Activated T-helper 1 cell treated with anti-CD3 and anti-CD28 coated beads, Interleukin-12 subunit alpha, Interleukin-12 subunit beta, Interleukin-2, Interleukin-4 antibody, amounts not matched to agents 30 ng/mL and 10 ng/mL and 1 ng/mL, durations not matched to agents 14 hours and 24 hours and 36 hours (primary cell): ENCODE measurements at regions of chr12 and their contacts with region 1.

Region 1: GRCh38 chr12:96399919-96400797 is at the start of gene CDK17:
- DNase-seq: peak; percentile 83
- H3K4me3 Mint-ChIP-seq: peak within 1 kb of the TSS; percentile 93
- H3K27ac Mint-ChIP-seq: peak within 1 kb of the TSS; percentile 97
- H3K4me1 Mint-ChIP-seq: peaks cover 66% of the 10 kb centered on the region
- H3K27me3 Mint-ChIP-seq: no peaks in the 10 kb centered on the region
- total RNA-seq, gene CDK17: 32.4 and 37.1 TPM in 2 replicates

Region 2: GRCh38 chr12:95762123-95762785 is 637.9 kb before region 1 on chr12:
- intact Hi-C with region 1: no loop called
- DNase-seq: no peak
- H3K4me3 Mint-ChIP-seq: no peak overlapping the region
- H3K27ac Mint-ChIP-seq: no peak overlapping the region
- H3K4me1 Mint-ChIP-seq: no peaks in the 10 kb centered on the region
- H3K27me3 Mint-ChIP-seq: peaks cover 23% of the 10 kb centered on the region

Region 3: DNA sequence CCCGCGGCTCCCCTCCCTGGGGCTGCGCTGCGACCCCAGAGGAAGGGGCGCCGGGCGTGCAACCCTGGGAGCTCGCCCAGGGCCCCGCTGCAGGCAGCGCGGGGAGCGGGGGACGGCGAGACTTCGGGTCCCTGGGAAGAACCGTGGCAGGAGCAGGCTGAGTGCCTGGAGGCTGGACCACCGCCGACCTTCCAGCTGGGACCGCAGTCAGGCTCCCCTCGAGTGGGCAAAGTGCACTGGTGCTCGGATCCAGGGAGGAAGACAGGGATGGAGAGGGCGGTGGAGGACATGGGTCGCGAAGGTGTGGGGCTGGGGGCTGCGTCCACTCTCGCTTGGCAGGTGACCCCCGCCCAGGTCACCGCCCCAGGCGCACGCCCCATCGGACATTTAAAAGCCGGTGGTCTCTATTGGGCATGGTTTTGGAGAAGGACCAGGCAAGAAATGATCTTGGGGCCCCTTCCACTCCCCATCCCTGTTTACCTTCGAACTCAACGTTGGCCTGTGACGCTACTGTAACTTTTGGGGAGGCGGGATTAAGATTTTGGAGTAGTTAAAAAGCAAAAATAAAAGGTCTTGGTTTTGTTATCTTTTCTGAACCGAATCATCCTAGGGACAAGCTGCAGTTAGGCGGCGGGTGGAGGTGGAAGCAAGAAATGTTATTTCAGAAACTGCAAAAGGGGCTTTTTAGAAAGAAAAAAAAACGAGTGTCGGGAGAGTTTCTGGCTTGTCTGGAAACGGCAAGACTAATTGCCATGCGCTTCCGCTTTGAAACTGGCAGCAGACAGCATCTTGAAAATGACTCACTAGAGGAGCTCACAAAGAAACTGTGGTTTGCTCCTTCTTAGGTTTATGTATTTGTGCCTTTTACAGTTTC is 204.9 kb before region 1 on chr12:
- intact Hi-C with region 1: loop called (anchors 1 kb)
- DNase-seq: peak; percentile 68
- H3K4me3 Mint-ChIP-seq: peak overlapping the region; percentile 96
- H3K27ac Mint-ChIP-seq: peak overlapping the region; percentile 98
- H3K4me1 Mint-ChIP-seq: peaks cover 49% of the 10 kb centered on the region
- H3K27me3 Mint-ChIP-seq: no peaks in the 10 kb centered on the region

Region 4: GRCh38 chr12:96335270-96335669 is 64.9 kb before region 1 on chr12:
- intact Hi-C with region 1: loop called (anchors 1 kb)
- DNase-seq: no peak
- H3K4me3 Mint-ChIP-seq: no peak overlapping the region
- H3K27ac Mint-ChIP-seq: no peak overlapping the region
- H3K4me1 Mint-ChIP-seq: peaks cover 42% of the 10 kb centered on the region
- H3K27me3 Mint-ChIP-seq: no peaks in the 10 kb centered on the region

Region 5: DNA sequence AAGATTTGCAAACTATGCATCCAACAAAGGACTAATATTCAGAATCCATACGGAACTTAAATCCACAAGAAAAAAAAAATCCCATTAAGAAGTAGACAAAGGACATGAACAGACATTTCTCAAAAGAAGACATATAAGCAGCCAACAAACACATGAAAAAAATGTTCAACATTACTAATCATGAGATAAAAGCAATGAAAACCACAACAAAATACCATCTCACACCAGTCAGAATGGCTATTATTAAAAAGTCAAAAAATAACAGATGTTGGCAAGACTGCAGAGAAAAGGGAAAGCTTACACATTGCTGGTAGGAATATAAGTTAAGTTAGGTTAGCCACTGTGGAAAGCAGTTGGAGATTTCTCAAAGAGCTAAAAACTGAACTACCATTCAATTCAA is 16.2 kb before region 1 on chr12:
- intact Hi-C with region 1: loop called (anchors 1 kb)
- DNase-seq: no peak
- H3K4me3 Mint-ChIP-seq: no peak overlapping the region
- H3K27ac Mint-ChIP-seq: no peak overlapping the region
- H3K4me1 Mint-ChIP-seq: peaks cover 61% of the 10 kb centered on the region
- H3K27me3 Mint-ChIP-seq: no peaks in the 10 kb centered on the region

Region 6: GRCh38 chr12:96445691-96446583 is 45.8 kb after region 1 on chr12:
- intact Hi-C with region 1: loop called (anchors 1 kb)
- DNase-seq: peak; percentile 70
- H3K4me3 Mint-ChIP-seq: peak overlapping the region; percentile 48
- H3K27ac Mint-ChIP-seq: peak overlapping the region; percentile 96
- H3K4me1 Mint-ChIP-seq: peaks cover 51% of the 10 kb centered on the region
- H3K27me3 Mint-ChIP-seq: no peaks in the 10 kb centered on the region